Ascending aorta (tissue), 2 donors: ENCODE measurements at regions of chr17 and their contacts with region 1.

Region 1: DNA sequence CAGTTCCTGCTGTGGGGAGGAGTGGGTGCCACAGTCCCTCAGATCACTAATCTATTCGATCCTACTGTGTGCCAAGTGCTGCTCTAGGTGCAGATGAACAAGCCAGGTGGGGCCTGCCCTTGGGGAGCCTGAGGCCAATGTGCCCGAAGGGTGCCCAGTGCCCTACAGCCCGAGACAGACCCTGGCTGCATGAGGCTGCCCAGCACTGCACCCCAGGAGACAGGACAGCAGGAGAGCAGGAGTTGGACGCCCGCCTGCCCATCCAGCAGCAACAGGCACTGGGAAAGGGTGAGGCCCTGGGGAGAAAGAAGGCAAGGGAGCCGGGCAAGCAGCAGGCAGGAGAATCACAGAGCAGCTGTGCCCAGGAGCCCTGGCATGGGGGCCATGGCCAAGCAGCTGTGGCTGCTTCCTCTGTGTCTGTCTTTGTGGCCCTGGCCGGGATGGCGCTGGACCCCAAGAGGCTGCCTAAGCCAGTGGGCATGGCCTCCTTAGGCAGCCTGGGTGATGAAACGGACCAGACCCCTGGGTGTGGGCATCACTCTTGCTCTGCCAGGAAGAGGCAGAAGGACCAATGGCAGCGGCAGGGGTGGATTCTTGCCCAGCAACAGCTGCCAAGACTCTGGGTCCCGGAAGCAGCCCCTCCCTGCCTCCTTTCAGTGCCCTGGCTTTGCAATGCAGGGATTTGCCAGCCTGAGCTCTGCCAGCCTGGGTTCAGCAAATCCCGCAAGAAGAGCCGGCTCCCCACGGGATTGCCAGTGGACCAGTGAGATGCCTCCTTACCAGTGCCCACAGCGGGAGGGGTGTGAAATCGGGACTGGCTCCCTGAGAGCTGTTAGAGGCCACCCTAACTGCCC is 179.6 kb upstream of the TNRC6C start:
- DNase-seq: peak; percentile 47 to 93
- H3K4me3 ChIP-seq: peak overlapping the region in 1 of 2 donors; percentile 37
- H3K27ac ChIP-seq: peak overlapping the region; percentile 83 to 91
- H3K4me1 ChIP-seq: peaks cover 16 to 30% of the 10 kb centered on the region in 2 donors
- H3K27me3 ChIP-seq: no peaks in the 10 kb centered on the region
- CTCF ChIP-seq: no peak

Region 2: DNA sequence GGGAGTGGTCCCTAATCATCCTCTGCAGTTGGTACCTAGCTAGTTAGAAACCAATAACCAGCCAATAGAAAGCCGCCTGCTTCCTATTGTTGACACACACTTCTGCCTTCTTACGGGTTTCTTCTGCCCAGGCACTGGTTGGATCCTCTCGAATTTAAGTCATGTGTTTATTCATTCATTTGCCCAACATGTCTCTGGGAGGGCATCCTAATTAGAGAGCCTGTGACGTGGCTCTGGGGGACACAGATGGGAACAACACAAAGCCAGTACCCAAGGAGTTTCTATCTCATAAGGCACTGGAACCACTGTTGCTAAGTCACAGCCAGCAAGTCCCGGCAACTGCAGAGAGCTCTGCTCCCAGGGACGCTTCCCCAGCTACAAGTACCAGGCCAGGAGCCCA is 121.0 kb before region 1 on chr17:
- intact Hi-C with region 1: no loop called
- DNase-seq: no peak
- H3K4me3 ChIP-seq: no peak overlapping the region
- H3K27ac ChIP-seq: no peak overlapping the region
- H3K4me1 ChIP-seq: no peaks in the 10 kb centered on the region
- H3K27me3 ChIP-seq: no peaks in the 10 kb centered on the region
- CTCF ChIP-seq: no peak

Region 3: DNA sequence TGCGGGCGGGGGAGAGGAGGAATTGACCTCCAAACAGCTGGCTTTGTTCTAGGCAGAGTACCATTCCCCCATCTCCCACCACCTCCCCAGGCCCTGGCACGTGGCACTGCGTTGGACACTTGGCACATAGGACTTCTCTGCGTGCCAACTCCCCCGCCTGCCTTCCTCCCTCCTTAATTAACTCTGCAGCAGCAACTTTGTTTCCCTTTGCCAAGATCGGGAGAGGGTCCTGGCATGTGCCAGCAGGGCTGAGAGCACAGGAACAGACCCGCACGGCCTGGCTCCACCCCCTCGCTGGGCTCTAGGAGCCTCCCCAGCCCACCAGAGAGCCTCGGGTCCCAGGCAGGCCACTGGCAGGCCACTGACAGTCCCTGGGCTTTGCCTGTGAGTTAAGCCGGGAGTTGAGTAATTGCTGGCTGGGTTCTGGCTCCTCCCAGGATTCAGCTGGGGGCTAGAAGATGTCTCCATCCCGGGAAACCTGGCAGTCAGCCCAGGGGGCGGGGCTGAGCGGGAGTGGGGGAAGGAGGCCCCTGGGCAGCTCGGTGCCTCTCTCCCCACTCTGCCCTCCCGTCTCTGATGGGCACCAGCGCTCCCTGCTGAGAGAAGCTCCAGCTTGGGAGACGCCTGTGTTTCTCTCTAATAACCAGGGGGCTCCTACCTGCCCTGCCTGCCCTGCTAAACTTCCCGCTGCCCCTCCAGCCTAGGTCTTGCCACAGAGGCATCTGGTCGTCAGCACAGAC is 44.4 kb before region 1 on chr17:
- intact Hi-C with region 1: loop called (anchors 2 kb)
- DNase-seq: peak; percentile 45 to 94
- H3K4me3 ChIP-seq: peak overlapping the region in 1 of 2 donors; percentile 47
- H3K27ac ChIP-seq: peak overlapping the region; percentile 85 to 87
- H3K4me1 ChIP-seq: peaks cover 21 to 44% of the 10 kb centered on the region in 2 donors
- H3K27me3 ChIP-seq: no peaks in the 10 kb centered on the region
- CTCF ChIP-seq: peak in 1 of 3 experiments; percentile 29

Region 4: GRCh38 chr17:77796176-77796860 is 17.5 kb after region 1 on chr17:
- intact Hi-C with region 1: loop called (anchors 1 kb)
- DNase-seq: peak; percentile 42 to 92
- H3K4me3 ChIP-seq: no peak overlapping the region
- H3K27ac ChIP-seq: peak overlapping the region; percentile 81 to 88
- H3K4me1 ChIP-seq: peaks cover 6 to 15% of the 10 kb centered on the region in 2 donors
- H3K27me3 ChIP-seq: no peaks in the 10 kb centered on the region
- CTCF ChIP-seq: no peak

Region 5: GRCh38 chr17:77810536-77810935 is 31.7 kb after region 1 on chr17:
- intact Hi-C with region 1: loop called (anchors 2 kb)
- DNase-seq: peak in 1 of 2 donors; percentile 88
- H3K4me3 ChIP-seq: no peak overlapping the region
- H3K27ac ChIP-seq: peak overlapping the region; percentile 52 to 73
- H3K4me1 ChIP-seq: peaks cover 17 to 20% of the 10 kb centered on the region in 2 donors
- H3K27me3 ChIP-seq: no peaks in the 10 kb centered on the region
- CTCF ChIP-seq: no peak

Region 6: GRCh38 chr17:77834170-77835115 is 55.6 kb after region 1 on chr17:
- intact Hi-C with region 1: loop called (anchors 2 kb)
- DNase-seq: peak; percentile 64 to 91
- H3K4me3 ChIP-seq: no peak overlapping the region
- H3K27ac ChIP-seq: peak overlapping the region; percentile 66 to 70
- H3K4me1 ChIP-seq: peaks cover 18 to 39% of the 10 kb centered on the region in 2 donors
- H3K27me3 ChIP-seq: no peaks in the 10 kb centered on the region
- CTCF ChIP-seq: no peak

Region 7: DNA sequence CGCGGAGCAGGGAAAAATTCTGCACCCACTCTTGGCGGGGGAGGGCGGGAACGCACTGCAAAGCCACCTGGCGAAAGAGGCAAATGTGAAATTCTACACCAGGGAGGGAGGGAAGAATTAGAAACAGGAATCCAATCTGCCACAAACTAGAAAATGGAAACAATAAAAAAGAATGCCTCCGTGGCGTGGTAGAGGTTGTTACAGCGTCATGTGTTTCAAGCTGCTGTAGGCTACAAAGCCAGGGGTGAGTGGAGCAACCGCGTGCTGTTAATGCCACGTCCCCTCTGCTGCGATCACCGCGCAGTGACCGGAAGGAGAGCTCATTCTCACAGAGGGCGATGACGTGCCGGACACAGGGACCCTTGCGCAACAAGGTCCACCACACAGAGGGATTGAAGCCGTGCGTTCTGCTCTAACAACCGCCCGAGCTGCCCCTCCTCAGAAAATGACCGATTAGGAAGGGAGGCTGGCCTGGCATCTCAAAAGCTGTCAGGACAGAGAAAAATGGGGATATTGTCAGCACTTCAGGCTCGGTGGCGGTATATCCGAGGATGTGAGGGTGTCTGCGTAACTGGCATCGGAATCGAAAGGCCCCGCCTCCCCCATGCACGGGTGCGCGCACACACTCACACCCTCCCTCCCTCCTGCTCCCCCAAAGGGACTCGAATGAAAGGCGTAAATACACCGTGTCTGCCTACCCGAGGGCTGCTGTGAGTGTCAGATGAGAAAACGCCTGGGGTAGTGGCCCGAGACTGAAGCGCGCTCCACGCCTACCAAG is 108.8 kb after region 1 on chr17:
- intact Hi-C with region 1: loop called (anchors 1 kb)
- DNase-seq: peak; percentile 80 to 97
- H3K4me3 ChIP-seq: peak overlapping the region; percentile 54 to 68
- H3K27ac ChIP-seq: peak overlapping the region; percentile 80 to 84
- H3K4me1 ChIP-seq: peaks cover 0 to 12% of the 10 kb centered on the region in 2 donors
- H3K27me3 ChIP-seq: no peaks in the 10 kb centered on the region
- CTCF ChIP-seq: no peak